GM12878 (cell line): ENCODE measurements at regions of chr13 and their contacts with region 1.

Region 1: GRCh38 chr13:23960566-23961156 is 63.4 kb upstream of the C1QTNF9B start:
- DNase-seq: no peak
- ATAC-seq: peak; percentile 38
- H3K4me3 ChIP-seq: no peak overlapping the region
- H3K27ac ChIP-seq: no peak overlapping the region
- H3K4me1 ChIP-seq: peaks cover 4% of the 10 kb centered on the region; the same call in 1 of the 2 replicates
- H3K27me3 ChIP-seq: no peaks in the 10 kb centered on the region; a peak in 1 of 4 replicates
- CTCF ChIP-seq: peak; percentile 50 to 58 (median 55)
- EP300 ChIP-seq: no peak
- POLR2A ChIP-seq: no peak
- RAD21 ChIP-seq: peak; percentile 61

Region 2: DNA sequence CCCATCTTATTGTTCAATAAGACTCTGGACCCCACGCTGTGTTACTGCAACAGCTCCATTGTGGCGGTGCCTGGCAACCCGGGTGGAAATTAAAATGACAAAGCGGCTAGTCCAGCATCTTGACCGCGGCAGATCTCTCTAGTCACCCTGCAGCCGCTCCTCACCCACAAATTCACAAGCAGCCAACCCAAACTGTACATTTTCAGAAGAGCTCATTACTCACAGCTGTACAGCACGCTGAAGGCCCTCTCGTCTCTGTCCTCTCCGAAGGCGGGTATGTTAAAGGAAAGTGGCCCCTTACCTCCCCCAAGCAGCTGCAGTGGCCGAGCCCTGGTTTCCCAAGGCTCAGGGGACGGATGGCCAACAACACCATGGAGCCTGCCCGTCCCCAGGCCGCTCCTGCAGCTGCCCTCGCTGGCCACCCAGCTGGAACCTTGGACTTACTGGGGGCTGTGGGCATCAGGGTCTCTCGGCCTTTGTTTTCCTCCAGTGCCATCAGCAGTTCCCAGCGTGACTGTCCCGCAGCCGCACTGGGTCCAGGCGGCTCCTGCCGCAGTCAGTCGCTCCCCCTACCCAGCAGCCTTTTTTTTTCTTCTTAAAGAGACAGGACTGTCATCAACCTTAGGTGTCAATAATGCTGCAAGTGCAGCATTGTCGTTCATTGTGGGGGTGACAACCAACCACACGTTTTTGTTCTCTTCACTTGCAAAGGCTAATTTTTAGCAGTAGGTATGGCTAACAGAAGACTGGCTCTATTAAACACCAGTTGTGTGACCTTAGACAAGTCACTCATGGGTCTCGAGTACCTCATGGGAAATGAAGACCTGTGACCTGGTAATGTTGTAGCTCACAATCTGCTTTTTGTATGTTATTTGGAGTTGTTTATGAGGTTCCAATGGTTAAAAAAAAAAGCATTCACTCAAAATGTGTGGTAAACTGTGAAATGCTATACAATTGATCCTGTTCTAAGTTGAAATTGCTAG is 527.2 kb before region 1 on chr13 and contains the start of gene SACS:
- CTCF ChIA-PET with region 1: no interaction called
- POLR2A ChIA-PET with region 1: no interaction called
- RAD21 ChIA-PET with region 1: no interaction called
- SMC1A ChIA-PET with region 1: no interaction called
- in situ Hi-C with region 1: no loop called
- intact Hi-C with region 1: no loop called
- DNase-seq: no peak
- ATAC-seq: peak; percentile 55
- H3K4me3 ChIP-seq: peak within 1 kb of the TSS; percentile 21; the same call in 1 of the 2 replicates
- H3K27ac ChIP-seq: no peak within 1 kb of the TSS
- H3K4me1 ChIP-seq: no peaks in the 10 kb centered on the region
- H3K27me3 ChIP-seq: no peaks in the 10 kb centered on the region; a peak in 3 of 4 replicates
- CTCF ChIP-seq: no peak
- EP300 ChIP-seq: no peak
- POLR2A ChIP-seq: no peak
- RAD21 ChIP-seq: no peak
- polyA plus RNA-seq, gene SACS: 9.9 to 15.2 TPM

Region 3: DNA sequence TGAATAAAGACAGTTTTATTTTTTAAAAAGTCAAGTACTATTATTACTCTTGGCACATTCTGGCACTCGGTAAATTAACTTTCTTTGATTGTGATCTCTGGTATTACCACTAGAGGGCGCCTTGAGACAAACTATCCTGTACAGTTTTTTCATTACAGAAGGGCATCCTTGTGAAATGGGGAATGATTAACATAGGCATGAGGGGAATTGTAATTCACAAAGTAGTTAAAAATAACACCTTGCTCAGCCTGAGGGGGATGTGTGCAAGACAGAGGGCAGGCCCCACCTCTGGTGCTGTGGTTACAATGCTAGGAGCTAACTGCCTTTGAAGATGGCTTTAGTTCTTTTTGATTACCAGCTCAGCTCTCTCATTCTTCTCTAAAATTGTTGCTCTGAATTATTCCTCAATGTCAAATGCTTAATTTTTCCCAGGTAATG is 39.2 kb before region 1 on chr13:
- CTCF ChIA-PET with region 1: interaction called, 31 read pairs
- POLR2A ChIA-PET with region 1: no interaction called
- RAD21 ChIA-PET with region 1: interaction called, 18 read pairs
- SMC1A ChIA-PET with region 1: interaction called, 12 read pairs
- in situ Hi-C with region 1: no loop called
- intact Hi-C with region 1: loop called (anchors 2 kb)
- DNase-seq: no peak
- ATAC-seq: peak; percentile 66
- H3K4me3 ChIP-seq: no peak overlapping the region
- H3K27ac ChIP-seq: no peak overlapping the region
- H3K4me1 ChIP-seq: no peaks in the 10 kb centered on the region
- H3K27me3 ChIP-seq: no peaks in the 10 kb centered on the region
- CTCF ChIP-seq: peak; percentile 57 to 72 (median 58)
- EP300 ChIP-seq: no peak
- POLR2A ChIP-seq: no peak
- RAD21 ChIP-seq: peak; percentile 84

Region 4: DNA sequence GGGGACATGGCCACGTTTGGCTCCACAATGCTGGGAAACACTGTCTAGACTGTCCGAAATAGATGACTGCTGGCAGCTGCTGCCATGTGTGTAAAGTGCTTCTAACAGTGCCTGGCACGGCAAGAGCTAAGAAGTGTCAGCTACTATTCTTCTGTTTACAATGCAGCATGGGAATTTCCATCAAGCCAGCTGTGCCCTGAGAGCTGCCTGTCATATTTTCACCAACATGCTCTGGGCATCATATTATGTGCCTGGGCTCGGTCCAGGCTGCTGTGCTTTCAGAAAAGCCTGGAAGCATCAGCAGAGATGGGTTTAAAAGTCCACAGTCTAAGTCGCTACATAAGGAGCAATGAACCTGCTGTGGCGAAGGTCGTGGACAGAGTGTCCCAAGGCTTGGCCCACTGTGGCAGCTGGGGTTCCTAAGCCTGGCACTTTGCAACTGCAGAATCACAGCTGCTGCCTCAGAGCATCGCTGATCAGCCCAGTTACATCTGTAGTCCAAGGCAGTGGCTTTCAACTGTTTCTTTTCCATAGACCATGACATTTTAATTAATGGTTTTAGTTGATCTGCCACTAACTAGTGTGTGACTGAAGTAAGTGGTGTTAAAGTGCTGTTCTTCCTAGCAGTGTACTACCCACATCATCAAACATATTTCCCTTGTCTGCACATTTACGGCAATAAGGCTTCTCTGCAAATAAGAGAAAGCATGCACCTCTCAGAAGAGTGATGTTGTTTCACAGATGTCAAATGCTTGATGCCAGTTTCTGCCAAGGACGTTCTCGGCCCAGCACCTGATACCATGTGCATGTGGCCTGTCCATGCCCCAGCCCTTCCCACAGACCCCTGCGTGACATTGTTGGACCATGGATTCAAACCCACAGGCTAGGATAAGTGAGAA is 32.4 kb after region 1 on chr13:
- CTCF ChIA-PET with region 1: interaction called, 5 read pairs
- POLR2A ChIA-PET with region 1: interaction called, 3 read pairs
- RAD21 ChIA-PET with region 1: no interaction called
- SMC1A ChIA-PET with region 1: interaction called, 12 read pairs
- in situ Hi-C with region 1: no loop called
- intact Hi-C with region 1: no loop called
- DNase-seq: peak; percentile 7
- ATAC-seq: peak; percentile 64
- H3K4me3 ChIP-seq: no peak overlapping the region
- H3K27ac ChIP-seq: no peak overlapping the region
- H3K4me1 ChIP-seq: peaks cover 3% of the 10 kb centered on the region; the same call in 1 of the 2 replicates
- H3K27me3 ChIP-seq: no peaks in the 10 kb centered on the region
- CTCF ChIP-seq: no peak
- EP300 ChIP-seq: no peak
- POLR2A ChIP-seq: no peak
- RAD21 ChIP-seq: no peak

Region 5: DNA sequence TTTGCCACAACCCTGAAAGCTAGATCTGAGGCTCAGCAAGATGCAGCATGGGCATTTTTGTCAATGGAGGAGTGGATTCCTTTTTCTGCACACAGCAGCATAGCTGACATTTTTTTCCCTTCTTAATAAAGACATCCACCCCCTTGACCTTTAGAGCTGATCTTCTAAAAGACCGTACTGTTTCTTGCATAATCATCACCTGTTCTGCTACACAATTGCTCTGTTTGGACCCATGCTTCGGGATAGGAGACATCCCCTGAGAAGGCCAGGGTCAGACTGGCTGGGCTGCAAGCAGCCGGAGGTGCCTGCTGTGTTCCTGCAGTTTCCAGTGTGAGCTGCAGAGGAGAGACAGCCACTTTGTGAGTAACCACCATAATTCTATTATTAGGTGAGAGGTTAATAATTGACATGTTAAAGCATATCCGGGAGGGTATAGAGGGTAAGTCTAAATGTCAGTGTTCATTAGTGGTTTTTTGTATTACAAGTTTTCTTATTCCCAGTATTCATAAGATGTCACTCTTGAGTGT is 45.2 kb after region 1 on chr13:
- CTCF ChIA-PET with region 1: interaction called, 17 read pairs
- POLR2A ChIA-PET with region 1: interaction called, 6 read pairs
- RAD21 ChIA-PET with region 1: interaction called, 20 read pairs
- SMC1A ChIA-PET with region 1: interaction called, 64 read pairs
- in situ Hi-C with region 1: no loop called
- intact Hi-C with region 1: loop called (anchors 5 kb)
- DNase-seq: peak; percentile 19
- ATAC-seq: peak; percentile 95
- H3K4me3 ChIP-seq: no peak overlapping the region
- H3K27ac ChIP-seq: no peak overlapping the region
- H3K4me1 ChIP-seq: no peaks in the 10 kb centered on the region
- H3K27me3 ChIP-seq: no peaks in the 10 kb centered on the region
- CTCF ChIP-seq: no peak
- EP300 ChIP-seq: peak; percentile 14 to 57; a peak in 1 of 4 replicates
- POLR2A ChIP-seq: no peak
- RAD21 ChIP-seq: no peak

Region 6: DNA sequence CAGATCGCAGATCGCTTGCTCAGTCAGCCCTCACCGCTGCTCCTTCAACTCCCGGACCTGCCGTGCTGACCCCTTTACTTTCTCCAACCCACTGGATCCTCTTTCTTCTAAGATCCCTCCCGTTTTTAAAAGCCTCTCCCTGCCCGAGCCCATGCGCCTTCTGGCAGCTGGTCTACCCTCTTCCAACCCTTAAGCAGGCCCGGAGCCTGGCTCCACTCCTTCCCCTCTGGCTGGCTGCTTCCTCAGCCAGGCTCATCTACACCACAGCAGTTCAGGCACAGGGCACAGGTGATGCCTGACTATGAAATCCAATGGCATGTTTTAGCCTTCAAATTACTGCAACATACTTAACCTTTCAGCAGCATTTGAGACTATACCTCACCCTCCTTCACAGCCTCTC is 1071.5 kb after region 1 on chr13:
- CTCF ChIA-PET with region 1: no interaction called
- POLR2A ChIA-PET with region 1: no interaction called
- RAD21 ChIA-PET with region 1: no interaction called
- SMC1A ChIA-PET with region 1: no interaction called
- in situ Hi-C with region 1: no loop called
- intact Hi-C with region 1: no loop called
- DNase-seq: no peak
- ATAC-seq: no peak
- H3K4me3 ChIP-seq: no peak overlapping the region
- H3K27ac ChIP-seq: no peak overlapping the region
- H3K4me1 ChIP-seq: no peaks in the 10 kb centered on the region; the same call in 1 of the 2 replicates
- H3K27me3 ChIP-seq: peaks cover 0 to 2% of the 10 kb centered on the region in 2 experiments; a peak in 2 of 4 replicates
- CTCF ChIP-seq: no peak
- EP300 ChIP-seq: no peak
- POLR2A ChIP-seq: no peak
- RAD21 ChIP-seq: no peak